ENCODE measurements at regions of chr3 and their contacts with region 1.

Region 1: DNA sequence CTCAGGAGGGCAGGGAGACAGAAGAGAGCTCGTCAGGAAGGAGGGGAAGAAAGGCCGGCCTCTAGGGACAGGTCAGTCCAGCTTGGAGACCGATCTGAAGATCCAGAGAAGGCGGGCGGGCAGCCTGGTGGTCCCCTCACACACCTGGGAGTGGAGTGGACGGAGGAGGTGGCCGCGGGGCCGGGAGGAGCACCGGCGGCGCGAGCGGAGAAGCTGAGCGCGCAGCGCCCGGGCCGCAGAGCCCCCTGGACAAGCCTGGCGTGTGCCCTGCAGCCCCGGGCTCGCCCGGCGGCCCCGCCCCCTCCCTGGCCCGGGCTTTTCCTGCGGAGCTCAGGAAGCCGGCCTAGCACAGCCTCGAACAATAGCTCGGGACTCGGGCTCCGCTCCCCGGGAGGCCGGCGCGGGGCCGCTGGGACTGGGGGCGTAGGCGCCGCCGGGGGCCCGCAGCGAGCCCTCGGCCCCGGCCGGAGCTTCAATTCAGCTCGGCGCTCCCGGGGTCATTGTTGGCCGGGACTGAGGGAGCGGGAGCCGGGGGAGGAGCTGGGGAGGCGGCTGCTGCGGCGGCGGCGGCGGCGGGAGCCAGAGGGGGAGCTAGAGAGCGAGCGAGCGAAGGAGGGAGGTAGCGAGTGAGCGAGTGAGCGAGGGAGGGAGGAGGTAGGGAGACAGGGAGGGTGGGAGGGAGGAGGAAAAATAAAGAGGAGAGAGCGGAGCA is 40.9 kb upstream of the ROPN1 start:
- DNase-seq: peak; percentile 90
- H3K4me3 ChIP-seq: peak overlapping the region; percentile 64 to 96 (median 65)
- H3K27ac ChIP-seq: peak overlapping the region; percentile 55
- H3K4me1 ChIP-seq: peaks cover 6% of the 10 kb centered on the region
- H3K27me3 ChIP-seq: peaks cover 22 to 31% of the 10 kb centered on the region in 2 experiments
- CTCF ChIP-seq: peak; percentile 48 to 70
- POLR2A ChIP-seq: peak; percentile 16

Region 2: DNA sequence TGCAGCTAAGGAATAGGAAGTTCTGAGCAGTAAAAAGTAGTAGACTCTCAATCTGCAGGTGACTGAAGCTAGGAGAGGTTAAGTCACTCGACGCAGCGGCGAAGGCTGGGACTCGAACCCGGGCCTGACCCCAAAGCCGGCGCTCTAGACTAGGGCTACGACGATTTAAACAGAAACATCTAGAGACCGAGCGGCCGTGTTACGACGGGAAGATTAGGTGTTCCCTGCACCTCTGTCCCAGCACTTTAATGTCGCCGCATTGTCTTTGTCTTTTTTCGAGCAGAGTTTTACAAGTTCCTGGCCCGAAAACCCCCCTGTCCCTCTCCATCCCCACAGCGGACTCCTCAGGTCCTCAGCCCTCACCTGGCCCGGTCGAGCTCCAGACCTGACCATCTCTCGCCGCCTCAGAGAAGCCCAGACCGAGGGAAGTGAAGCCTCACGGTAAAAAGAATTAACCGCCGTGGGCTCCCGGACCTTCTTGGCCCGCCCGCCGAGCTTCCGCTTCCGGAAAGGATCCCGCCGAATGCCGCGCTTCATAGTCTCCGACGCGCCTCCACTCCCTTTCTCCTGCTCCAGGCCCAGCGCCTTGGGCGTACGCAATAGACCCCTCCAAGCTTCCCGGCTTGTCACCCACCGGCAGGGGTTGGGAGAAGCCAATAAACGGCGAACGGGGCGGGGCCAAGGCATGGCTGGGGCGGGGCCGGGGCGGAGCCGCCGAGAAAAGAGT is 71.9 kb before region 1 on chr3 and contains the start of gene CCDC14:
- CTCF ChIA-PET with region 1: interaction called, 5 read pairs
- POLR2A ChIA-PET with region 1: no interaction called
- dilution Hi-C with region 1: no loop called
- intact Hi-C with region 1: loop called (anchors 2 kb)
- DNase-seq: peak; percentile 95
- H3K4me3 ChIP-seq: peak within 1 kb of the TSS; percentile 58 to 97 (median 94)
- H3K27ac ChIP-seq: peak within 1 kb of the TSS; percentile 81
- H3K4me1 ChIP-seq: peaks cover 28% of the 10 kb centered on the region
- H3K27me3 ChIP-seq: peaks cover 5 to 7% of the 10 kb centered on the region in 2 experiments
- CTCF ChIP-seq: no peak
- POLR2A ChIP-seq: peak; percentile 67
- total RNA-seq, gene CCDC14: 46.3 and 47.5 TPM in 2 replicates

Region 3: DNA sequence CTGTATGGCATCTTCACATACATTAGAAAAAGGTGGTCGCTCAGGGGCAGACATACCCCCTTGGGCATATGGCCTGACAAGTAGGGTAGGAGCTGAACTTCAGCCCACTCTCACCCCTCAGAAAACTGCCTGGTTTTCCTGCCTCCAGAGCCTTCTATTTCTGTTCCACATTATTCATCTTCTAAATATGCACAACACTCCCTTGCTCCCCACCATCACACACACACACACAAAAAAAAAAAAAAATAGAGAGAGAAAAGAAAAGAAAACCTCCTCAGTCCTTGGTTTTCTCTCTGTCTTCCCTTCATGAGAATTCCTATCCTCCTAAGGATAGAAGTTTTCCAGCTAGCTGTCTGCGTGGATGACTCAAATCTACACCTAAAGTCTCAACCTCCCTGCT is 35.3 kb before region 1 on chr3:
- CTCF ChIA-PET with region 1: no interaction called
- POLR2A ChIA-PET with region 1: no interaction called
- dilution Hi-C with region 1: no loop called
- intact Hi-C with region 1: no loop called
- DNase-seq: no peak
- H3K4me3 ChIP-seq: no peak overlapping the region
- H3K27ac ChIP-seq: no peak overlapping the region
- H3K4me1 ChIP-seq: no peaks in the 10 kb centered on the region
- H3K27me3 ChIP-seq: peaks cover 11 to 44% of the 10 kb centered on the region in 2 experiments
- CTCF ChIP-seq: no peak
- POLR2A ChIP-seq: no peak

Region 4: GRCh38 chr3:124044956-124045355 is 12.2 kb after region 1 on chr3:
- CTCF ChIA-PET with region 1: interaction called, 18 read pairs
- POLR2A ChIA-PET with region 1: no interaction called
- dilution Hi-C with region 1: no loop called
- intact Hi-C with region 1: no loop called
- DNase-seq: no peak
- H3K4me3 ChIP-seq: no peak overlapping the region
- H3K27ac ChIP-seq: no peak overlapping the region
- H3K4me1 ChIP-seq: no peaks in the 10 kb centered on the region
- H3K27me3 ChIP-seq: peaks cover 7 to 19% of the 10 kb centered on the region in 2 experiments
- CTCF ChIP-seq: no peak
- POLR2A ChIP-seq: no peak

Region 5: GRCh38 chr3:124248471-124249028 is 215.7 kb after region 1 on chr3:
- CTCF ChIA-PET with region 1: interaction called, 12 read pairs
- POLR2A ChIA-PET with region 1: no interaction called
- dilution Hi-C with region 1: no loop called
- intact Hi-C with region 1: no loop called
- DNase-seq: peak; percentile 79
- H3K4me3 ChIP-seq: no peak overlapping the region
- H3K27ac ChIP-seq: peak overlapping the region; percentile 77
- H3K4me1 ChIP-seq: peaks cover 27% of the 10 kb centered on the region
- H3K27me3 ChIP-seq: no peaks in the 10 kb centered on the region
- CTCF ChIP-seq: no peak
- POLR2A ChIP-seq: no peak

Region 6: DNA sequence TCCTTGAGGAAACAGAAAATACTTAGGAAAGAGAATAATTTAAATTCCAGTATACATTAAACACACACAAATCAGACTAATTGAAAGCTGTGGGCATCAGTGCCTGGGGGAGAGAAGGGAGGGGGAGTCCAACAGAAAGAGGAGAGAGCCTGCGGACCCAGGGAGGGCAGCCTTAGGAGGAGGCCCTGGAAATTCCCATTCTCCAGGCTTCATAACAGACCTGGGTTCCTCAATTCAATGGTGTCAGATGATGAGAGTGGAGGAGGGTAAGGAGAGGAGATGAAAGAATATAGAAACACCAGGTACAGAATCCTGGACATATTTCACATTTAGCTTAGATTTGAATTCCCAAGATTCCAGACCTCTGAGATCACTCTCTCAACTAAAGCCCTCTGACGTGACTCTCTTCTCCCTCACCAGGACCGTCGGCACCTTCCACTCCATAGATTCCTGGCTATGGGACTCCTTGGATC is 377.0 kb after region 1 on chr3:
- CTCF ChIA-PET with region 1: no interaction called
- POLR2A ChIA-PET with region 1: no interaction called
- dilution Hi-C with region 1: no loop called
- intact Hi-C with region 1: loop called (anchors 5 kb)
- DNase-seq: peak; percentile 33
- H3K4me3 ChIP-seq: no peak overlapping the region
- H3K27ac ChIP-seq: peak overlapping the region; percentile 55
- H3K4me1 ChIP-seq: peaks cover 33% of the 10 kb centered on the region
- H3K27me3 ChIP-seq: no peaks in the 10 kb centered on the region
- CTCF ChIP-seq: no peak
- POLR2A ChIP-seq: no peak

Measured in endothelial cell of umbilical vein (primary cell).